Prostate gland (tissue), 2 donors: ENCODE measurements at regions of chr19 and their contacts with region 1.

Region 1: DNA sequence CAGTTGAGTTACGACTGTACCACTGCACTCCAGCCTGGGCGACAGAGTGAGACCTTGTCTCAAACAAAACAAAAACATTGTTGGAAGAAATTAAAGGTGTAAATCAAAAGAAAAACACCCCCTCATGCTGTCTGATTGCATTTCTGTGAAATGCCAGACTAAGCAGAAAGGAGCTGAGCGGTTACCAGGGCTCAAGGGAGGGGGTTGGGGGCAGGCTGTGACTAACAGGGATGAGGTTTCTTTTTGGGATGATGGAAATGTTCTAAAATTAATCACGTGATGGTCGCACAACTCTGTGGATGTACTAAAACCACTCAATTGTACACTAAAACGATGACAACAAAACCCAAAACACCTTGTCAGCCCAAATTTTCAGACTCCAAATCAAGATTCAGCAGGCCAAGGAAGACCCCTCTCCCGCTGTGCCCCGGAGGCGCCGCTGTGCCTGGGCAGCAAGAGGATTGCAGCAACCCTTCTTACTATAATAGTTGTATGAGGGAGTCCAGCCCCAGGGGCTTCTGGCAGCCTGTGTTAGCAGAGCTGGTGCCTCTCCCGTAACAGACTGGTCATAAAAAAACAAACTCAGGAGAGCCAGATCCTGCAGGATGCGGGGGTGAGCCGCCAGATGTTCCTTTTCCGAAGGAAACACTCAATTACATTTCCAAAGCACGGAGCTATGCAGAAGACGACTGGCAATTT is 20.9 kb downstream of the CAPS start:
- DNase-seq: no peak
- H3K4me3 ChIP-seq: no peak overlapping the region
- H3K27ac ChIP-seq: peak overlapping the region; percentile 4 to 18
- H3K4me1 ChIP-seq: peaks cover 11% of the 10 kb centered on the region
- H3K27me3 ChIP-seq: no peaks in the 10 kb centered on the region
- CTCF ChIP-seq: no peak
- POLR2A ChIP-seq: no peak

Region 2: DNA sequence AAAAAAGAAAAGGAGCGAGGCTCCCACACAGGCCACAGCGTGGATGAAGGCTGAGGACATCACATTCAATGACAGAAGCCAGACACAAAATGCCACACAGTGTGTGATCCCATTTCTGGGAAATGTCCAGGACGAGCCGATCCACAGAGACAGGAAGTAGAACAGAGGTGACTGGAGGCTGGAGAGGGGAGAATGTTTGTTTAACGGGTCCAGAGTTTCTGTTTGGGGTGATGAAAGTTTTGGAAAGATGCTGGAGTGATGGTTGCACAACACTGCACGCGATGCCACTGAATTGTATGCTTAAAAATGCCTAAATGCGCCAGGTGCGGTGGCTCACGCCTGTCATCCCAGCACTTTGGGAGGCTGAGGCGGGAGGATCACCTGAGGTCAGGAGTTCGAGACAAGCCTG is 63.9 kb before region 1 on chr19:
- intact Hi-C with region 1: no loop called
- DNase-seq: no peak
- H3K4me3 ChIP-seq: no peak overlapping the region
- H3K27ac ChIP-seq: no peak overlapping the region
- H3K4me1 ChIP-seq: no peaks in the 10 kb centered on the region
- H3K27me3 ChIP-seq: no peaks in the 10 kb centered on the region
- CTCF ChIP-seq: no peak
- POLR2A ChIP-seq: no peak

Region 3: DNA sequence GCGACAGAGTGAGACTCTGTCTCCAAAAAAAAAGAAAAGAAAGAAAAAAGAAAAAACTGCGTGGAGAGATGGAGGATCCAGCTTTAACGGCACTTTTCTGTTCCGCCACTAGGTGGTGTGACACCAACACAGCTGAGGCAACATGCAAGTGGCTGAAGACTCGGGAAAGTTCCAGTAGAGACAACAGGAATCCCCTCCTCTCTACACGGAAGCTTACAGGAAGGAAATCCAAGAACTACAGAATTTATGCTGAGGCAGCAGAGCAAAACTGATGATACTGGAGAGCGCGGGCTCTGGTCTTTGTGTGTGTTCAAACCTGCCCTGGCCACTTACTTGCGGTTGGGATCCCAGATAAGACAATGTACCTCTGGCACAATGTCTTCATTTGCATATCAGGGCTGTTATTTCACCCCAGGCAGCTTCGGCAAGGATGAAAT is 33.1 kb after region 1 on chr19:
- intact Hi-C with region 1: loop called (anchors 5 kb)
- DNase-seq: peak; percentile 79
- H3K4me3 ChIP-seq: no peak overlapping the region
- H3K27ac ChIP-seq: peak overlapping the region; percentile 82 to 83
- H3K4me1 ChIP-seq: peaks cover 19% of the 10 kb centered on the region
- H3K27me3 ChIP-seq: no peaks in the 10 kb centered on the region
- CTCF ChIP-seq: peak; percentile 79 to 96 (median 94)
- POLR2A ChIP-seq: no peak

Region 4: DNA sequence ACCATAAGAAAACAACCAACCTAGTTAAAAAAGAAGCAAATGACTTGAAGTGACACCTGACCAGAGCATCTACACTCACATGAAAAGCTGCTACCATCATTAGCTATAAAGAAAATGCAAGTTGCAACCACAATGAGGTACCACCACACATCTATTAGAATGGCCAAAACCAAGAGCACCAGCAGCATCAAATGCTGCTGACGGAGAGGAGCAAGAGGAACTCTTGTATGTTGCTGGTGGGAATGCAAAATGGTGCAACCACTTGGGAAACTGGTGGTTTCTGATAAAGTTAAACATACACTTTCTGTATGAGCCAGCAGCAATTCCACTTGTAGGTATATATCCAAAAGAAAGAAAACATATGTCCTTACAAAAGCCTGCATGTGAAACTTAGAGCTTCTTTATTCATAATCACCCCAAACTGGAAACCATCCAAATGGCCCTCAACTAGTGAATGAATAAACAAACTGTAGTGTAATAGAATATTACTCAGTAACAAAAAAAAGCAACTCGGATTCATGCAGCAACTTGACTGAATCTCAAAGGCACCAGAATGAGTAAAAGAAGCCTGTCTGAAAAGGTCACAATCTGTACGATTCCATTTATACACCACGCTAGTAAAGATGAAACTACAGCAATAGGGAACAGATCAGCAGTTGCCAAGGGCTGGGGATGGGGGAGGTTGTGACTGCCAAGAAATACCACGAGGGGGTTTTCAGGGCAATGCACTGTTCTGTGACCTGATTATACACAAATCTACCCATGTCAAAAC is 103.9 kb after region 1 on chr19:
- intact Hi-C with region 1: no loop called
- DNase-seq: no peak
- H3K4me3 ChIP-seq: no peak overlapping the region
- H3K27ac ChIP-seq: no peak overlapping the region
- H3K4me1 ChIP-seq: no peaks in the 10 kb centered on the region
- H3K27me3 ChIP-seq: no peaks in the 10 kb centered on the region
- CTCF ChIP-seq: no peak
- POLR2A ChIP-seq: no peak